B cell (primary cell): ENCODE measurements at regions of chr21 and their contacts with region 1.

Region 1: DNA sequence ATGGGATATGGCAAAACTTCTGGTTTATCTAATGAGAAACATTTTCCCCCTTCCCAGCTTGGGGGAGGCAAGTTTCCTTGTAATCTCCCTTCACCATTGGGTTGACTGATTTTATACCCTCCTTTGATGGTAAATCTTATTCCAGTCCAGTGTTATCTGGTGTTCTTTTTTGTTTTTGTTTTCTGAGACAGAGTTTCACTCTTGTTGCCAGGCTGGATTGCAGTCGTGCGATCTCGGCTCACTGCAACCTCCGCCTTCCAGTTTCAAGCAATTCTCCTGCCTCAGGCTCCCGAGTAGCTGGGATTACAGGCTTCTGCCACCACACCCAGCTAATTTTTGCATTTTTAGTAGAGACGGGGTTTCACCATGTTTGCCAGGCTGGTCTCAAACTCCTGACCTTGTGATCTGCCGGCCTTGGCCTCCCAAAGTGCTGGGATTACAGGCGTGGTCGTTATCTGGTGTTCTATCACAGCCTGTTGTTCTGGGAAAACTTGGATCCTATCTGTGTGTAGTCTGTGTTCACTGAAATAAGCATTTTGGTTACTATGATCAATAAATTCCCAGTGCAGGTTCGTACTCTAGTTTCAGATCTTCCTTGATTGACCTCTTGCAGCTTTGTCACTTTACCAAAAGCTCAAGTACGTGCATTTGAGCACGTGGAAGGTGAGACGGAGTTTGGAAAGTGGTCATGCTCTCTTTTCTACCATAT is 281.1 kb downstream of the NCAM2 start:
- DNase-seq: no peak
- ATAC-seq: no peak
- H3K4me3 ChIP-seq: no peak overlapping the region
- H3K4me3 Mint-ChIP-seq: no peak overlapping the region
- H3K27ac ChIP-seq: no peak overlapping the region
- H3K27ac Mint-ChIP-seq: no peak overlapping the region
- H3K4me1 ChIP-seq: no peaks in the 10 kb centered on the region
- H3K4me1 Mint-ChIP-seq: no peaks in the 10 kb centered on the region
- H3K27me3 ChIP-seq: no peaks in the 10 kb centered on the region
- H3K27me3 Mint-ChIP-seq: no peaks in the 10 kb centered on the region
- CTCF ChIP-seq: no peak

Region 2: DNA sequence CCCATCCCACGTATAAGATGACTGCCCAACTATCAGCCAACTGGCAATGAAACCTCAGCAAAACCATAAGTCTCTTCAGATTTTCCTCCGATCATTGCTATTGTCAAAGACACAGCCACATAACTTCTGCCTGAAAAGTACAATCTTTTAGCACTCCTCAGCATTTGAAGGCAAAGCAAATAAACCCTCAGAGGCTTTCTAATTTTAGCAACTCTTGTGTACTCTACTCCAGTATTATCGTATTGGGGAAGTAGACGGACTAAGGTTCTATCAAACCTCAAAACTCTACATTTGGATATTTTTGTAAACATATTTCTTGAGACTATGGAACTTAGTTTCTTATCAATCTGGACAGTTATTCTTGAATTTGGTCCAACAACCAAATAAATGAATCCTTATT is 1487.3 kb before region 1 on chr21:
- CTCF ChIA-PET with region 1: no interaction called
- POLR2A ChIA-PET with region 1: no interaction called
- intact Hi-C with region 1: loop called (anchors 10 kb)
- DNase-seq: no peak
- ATAC-seq: no peak
- H3K4me3 ChIP-seq: no peak overlapping the region
- H3K4me3 Mint-ChIP-seq: no peak overlapping the region
- H3K27ac ChIP-seq: no peak overlapping the region
- H3K27ac Mint-ChIP-seq: no peak overlapping the region
- H3K4me1 ChIP-seq: no peaks in the 10 kb centered on the region
- H3K4me1 Mint-ChIP-seq: no peaks in the 10 kb centered on the region
- H3K27me3 ChIP-seq: no peaks in the 10 kb centered on the region
- H3K27me3 Mint-ChIP-seq: no peaks in the 10 kb centered on the region
- CTCF ChIP-seq: no peak

Region 3: GRCh38 chr21:21268061-21268471 is 11.3 kb before region 1 on chr21:
- CTCF ChIA-PET with region 1: no interaction called
- POLR2A ChIA-PET with region 1: no interaction called
- intact Hi-C with region 1: no loop called
- DNase-seq: no peak
- ATAC-seq: no peak
- H3K4me3 ChIP-seq: no peak overlapping the region
- H3K4me3 Mint-ChIP-seq: no peak overlapping the region
- H3K27ac ChIP-seq: no peak overlapping the region
- H3K27ac Mint-ChIP-seq: no peak overlapping the region
- H3K4me1 ChIP-seq: no peaks in the 10 kb centered on the region
- H3K4me1 Mint-ChIP-seq: no peaks in the 10 kb centered on the region
- H3K27me3 ChIP-seq: no peaks in the 10 kb centered on the region
- H3K27me3 Mint-ChIP-seq: no peaks in the 10 kb centered on the region
- CTCF ChIP-seq: no peak